MCF 10A (cell line): ENCODE measurements at regions of chr11 and their contacts with region 1.

Region 1: DNA sequence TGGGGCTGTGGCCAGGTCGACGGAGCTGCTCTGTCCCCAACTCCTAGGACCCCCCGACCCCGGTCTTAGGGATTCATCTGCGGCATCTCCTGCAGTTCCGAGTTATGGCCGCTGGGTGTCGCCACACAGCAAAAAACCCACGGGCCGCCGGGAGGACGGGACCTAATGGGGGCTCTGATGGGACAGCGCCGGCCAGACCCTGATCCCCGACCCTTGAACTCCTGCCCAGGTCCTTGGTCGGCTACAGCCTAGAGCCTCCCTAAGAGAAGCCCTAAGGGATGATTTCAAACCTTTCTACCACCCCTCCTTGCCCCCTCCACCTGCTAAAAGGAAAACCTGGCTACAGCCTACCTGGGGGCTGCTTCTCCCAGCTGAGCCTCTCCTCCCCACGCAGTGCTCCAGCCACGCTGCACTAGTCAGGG is 30.8 kb upstream of the LRRC10B start:
- DNase-seq: peak; percentile 27
- H3K4me3 Mint-ChIP-seq: no peak overlapping the region
- H3K27ac Mint-ChIP-seq: no peak overlapping the region
- H3K4me1 Mint-ChIP-seq: peaks cover 9% of the 10 kb centered on the region
- H3K27me3 Mint-ChIP-seq: no peaks in the 10 kb centered on the region
- CTCF ChIP-seq: peak; percentile 88

Region 2: DNA sequence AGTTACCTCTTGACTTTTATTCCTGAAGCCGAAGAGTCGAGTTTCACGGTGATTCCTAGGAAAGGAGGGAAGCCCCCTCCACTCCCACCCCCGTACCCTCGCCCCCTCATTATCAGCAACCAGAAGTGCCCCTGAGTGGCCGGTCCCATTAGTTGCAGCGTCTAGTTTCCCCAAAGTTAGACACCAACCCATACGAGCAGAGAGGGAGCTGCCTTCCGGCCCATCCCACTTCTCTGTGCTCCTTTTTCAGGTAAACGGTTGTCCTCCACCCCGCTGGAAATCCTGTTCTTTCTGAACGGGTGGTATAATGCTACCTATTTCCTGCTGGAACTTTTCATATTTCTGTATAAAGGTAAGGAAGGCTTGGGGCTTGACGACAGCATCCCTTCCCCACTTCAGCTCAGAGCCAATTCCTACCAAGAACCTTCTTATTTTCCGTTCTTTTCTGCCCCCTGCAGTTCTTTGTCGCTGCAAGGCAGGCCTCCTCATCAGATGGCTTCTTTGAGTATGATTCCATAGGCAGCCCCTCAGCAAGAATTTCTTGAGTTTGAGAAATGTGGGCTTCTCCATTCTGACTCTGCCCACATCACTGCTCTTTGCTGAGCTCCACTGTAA is 84.7 kb before region 1 on chr11:
- CTCF ChIA-PET with region 1: no interaction called
- POLR2A ChIA-PET with region 1: no interaction called
- intact Hi-C with region 1: no loop called
- DNase-seq: no peak
- H3K4me3 Mint-ChIP-seq: peak overlapping the region; percentile 66
- H3K27ac Mint-ChIP-seq: peak overlapping the region; percentile 54
- H3K4me1 Mint-ChIP-seq: no peaks in the 10 kb centered on the region
- H3K27me3 Mint-ChIP-seq: peaks cover 20% of the 10 kb centered on the region
- CTCF ChIP-seq: no peak

Region 3: GRCh38 chr11:61422226-61422625 is 55.5 kb before region 1 on chr11:
- CTCF ChIA-PET with region 1: no interaction called
- POLR2A ChIA-PET with region 1: no interaction called
- intact Hi-C with region 1: no loop called
- DNase-seq: no peak
- H3K4me3 Mint-ChIP-seq: no peak overlapping the region
- H3K27ac Mint-ChIP-seq: peak overlapping the region; percentile 5
- H3K4me1 Mint-ChIP-seq: peaks cover 15% of the 10 kb centered on the region
- H3K27me3 Mint-ChIP-seq: no peaks in the 10 kb centered on the region
- CTCF ChIP-seq: no peak

Region 4: GRCh38 chr11:61488651-61489291 is 11.0 kb after region 1 on chr11:
- CTCF ChIA-PET with region 1: interaction called, 36 read pairs
- POLR2A ChIA-PET with region 1: no interaction called
- intact Hi-C with region 1: no loop called
- DNase-seq: no peak
- H3K4me3 Mint-ChIP-seq: peak overlapping the region; percentile 4
- H3K27ac Mint-ChIP-seq: no peak overlapping the region
- H3K4me1 Mint-ChIP-seq: peaks cover 7% of the 10 kb centered on the region
- H3K27me3 Mint-ChIP-seq: peaks cover 1% of the 10 kb centered on the region
- CTCF ChIP-seq: no peak

Region 5: DNA sequence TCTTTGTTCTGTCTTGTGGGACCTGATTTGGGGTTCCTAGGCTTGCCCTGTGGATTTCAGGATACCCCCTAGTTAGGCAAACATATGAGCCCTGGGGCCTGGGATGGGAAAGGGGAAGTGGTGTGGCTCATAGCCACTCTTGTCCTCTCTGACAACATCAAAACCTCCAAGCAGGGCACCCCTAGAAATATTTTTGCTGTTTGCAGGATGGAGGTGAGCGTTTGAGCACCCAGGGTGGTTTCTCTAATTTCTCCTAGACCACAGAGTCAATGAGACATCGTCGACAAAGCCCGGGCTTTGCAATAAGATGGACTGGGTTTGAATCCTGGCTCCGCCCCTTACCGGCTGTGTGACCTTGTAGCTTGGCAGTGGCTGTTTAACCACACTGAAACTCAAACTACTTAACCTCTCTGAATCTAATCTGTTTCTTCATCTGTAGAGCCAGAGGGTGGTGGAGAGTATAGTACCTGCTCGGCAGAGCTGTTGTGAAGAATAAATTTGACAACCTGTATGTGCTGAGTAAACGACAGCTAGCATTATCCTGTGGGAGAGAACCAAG is 25.6 kb after region 1 on chr11:
- CTCF ChIA-PET with region 1: interaction called, 16 read pairs
- POLR2A ChIA-PET with region 1: no interaction called
- intact Hi-C with region 1: no loop called
- DNase-seq: no peak
- H3K4me3 Mint-ChIP-seq: no peak overlapping the region
- H3K27ac Mint-ChIP-seq: no peak overlapping the region
- H3K4me1 Mint-ChIP-seq: no peaks in the 10 kb centered on the region
- H3K27me3 Mint-ChIP-seq: peaks cover 8% of the 10 kb centered on the region
- CTCF ChIP-seq: no peak

Region 6: GRCh38 chr11:61522884-61523283 is 45.1 kb after region 1 on chr11:
- CTCF ChIA-PET with region 1: interaction called, 80 read pairs
- POLR2A ChIA-PET with region 1: no interaction called
- intact Hi-C with region 1: no loop called
- DNase-seq: no peak
- H3K4me3 Mint-ChIP-seq: no peak overlapping the region
- H3K27ac Mint-ChIP-seq: no peak overlapping the region
- H3K4me1 Mint-ChIP-seq: no peaks in the 10 kb centered on the region
- H3K27me3 Mint-ChIP-seq: no peaks in the 10 kb centered on the region
- CTCF ChIP-seq: no peak

Region 7: GRCh38 chr11:61627567-61628445 is 150.1 kb after region 1 on chr11:
- CTCF ChIA-PET with region 1: interaction called, 142 read pairs
- POLR2A ChIA-PET with region 1: no interaction called
- intact Hi-C with region 1: loop called (anchors 1 kb)
- DNase-seq: peak; percentile 75
- H3K4me3 Mint-ChIP-seq: no peak overlapping the region
- H3K27ac Mint-ChIP-seq: peak overlapping the region; percentile 54
- H3K4me1 Mint-ChIP-seq: peaks cover 12% of the 10 kb centered on the region
- H3K27me3 Mint-ChIP-seq: no peaks in the 10 kb centered on the region
- CTCF ChIP-seq: peak; percentile 94

Region 8: DNA sequence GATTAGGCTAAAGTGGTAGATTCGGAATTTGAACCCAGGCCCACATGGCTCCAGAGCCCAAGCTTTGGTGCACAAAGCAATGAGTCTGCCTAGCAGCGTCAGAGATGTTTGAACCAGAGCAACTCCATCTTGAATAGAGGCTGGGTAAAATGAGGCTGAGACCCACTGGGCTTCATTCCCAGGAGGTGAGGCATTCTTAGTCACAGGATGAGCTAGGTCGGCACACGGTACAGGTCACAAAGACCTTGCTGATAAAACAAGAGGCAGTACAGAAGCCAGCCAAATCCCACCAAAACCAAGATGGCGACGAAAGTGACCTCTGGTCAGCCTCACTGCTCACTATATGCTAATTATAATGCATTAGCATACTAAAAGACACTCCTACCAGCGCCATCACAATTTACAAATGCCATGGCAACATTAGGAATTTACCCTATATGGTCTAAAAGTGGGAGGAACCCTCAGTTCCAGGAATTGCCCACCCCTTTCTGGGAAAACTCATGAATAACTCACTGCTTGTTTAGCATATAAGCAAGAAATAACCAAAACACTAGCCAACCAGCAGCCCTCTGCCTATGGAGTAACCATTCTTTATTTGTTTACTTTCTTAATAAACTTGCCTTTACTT is 162.2 kb after region 1 on chr11:
- CTCF ChIA-PET with region 1: interaction called, 142 read pairs
- POLR2A ChIA-PET with region 1: no interaction called
- intact Hi-C with region 1: loop called (anchors 1 kb)
- DNase-seq: no peak
- H3K4me3 Mint-ChIP-seq: no peak overlapping the region
- H3K27ac Mint-ChIP-seq: no peak overlapping the region
- H3K4me1 Mint-ChIP-seq: no peaks in the 10 kb centered on the region
- H3K27me3 Mint-ChIP-seq: peaks cover 27% of the 10 kb centered on the region
- CTCF ChIP-seq: no peak

Region 9: DNA sequence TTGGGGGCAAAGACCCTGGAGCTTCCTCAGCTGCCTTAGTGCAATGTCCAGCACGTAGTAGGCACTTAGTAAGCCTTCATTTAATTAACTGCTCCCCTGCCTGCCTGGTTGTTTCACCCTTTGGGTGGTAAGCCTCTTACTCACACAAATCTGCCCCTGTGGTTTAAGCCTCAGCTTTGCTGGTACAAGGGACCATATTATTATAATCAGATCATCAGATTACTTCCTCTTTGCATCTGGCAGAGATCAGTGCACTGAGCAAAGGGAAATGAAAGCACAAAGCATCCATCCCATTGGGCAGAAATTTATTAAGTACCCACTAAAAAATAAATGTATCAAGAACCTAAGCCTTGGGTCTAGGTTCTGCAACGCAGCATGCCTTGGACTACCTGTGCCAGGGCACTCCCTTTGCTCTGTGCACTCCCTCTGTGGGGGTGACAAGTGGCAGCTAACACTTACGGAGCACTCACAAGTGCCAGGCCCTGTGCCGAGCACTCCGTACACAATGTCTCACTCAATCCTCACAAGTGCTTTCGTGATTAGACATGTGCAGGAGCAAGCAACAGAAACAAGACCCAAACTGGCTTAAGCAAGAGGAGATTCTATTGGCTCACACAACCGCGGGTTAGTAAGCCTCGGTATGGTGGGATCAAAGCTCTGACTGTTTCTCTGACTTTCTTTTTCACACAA is 167.6 kb after region 1 on chr11:
- CTCF ChIA-PET with region 1: interaction called, 142 read pairs
- POLR2A ChIA-PET with region 1: no interaction called
- intact Hi-C with region 1: no loop called
- DNase-seq: no peak
- H3K4me3 Mint-ChIP-seq: no peak overlapping the region
- H3K27ac Mint-ChIP-seq: no peak overlapping the region
- H3K4me1 Mint-ChIP-seq: no peaks in the 10 kb centered on the region
- H3K27me3 Mint-ChIP-seq: peaks cover 27% of the 10 kb centered on the region
- CTCF ChIP-seq: no peak